SK-N-SH (cell line): ENCODE measurements at regions of chr3 and their contacts with region 1.

Region 1: DNA sequence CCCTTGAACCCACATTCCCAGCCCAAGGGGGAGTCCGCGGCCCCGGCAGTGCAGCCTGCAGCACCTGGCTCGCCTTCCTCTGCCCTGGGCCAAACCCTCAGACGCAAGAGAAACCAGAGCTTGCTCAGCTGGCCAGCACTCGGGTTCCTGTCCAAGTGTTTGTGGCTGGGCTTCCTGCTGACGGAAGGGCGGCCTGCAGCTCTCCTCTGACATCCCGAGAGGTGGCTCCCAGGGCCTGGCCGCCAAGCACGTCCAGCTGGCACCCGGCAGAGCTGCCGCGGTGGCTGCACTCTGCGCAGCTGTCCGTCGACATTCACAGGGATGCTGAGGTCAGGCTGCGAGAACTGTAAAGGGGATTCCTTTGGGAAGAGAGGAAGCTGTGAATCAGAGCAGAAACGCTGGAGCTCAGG is 85.6 kb downstream of the CPN2 start:
- DNase-seq: peak; percentile 83
- H3K4me3 ChIP-seq: no peak overlapping the region
- H3K27ac ChIP-seq: peak overlapping the region in 1 of 2 experiments; percentile 64; a peak in 2 of 4 replicates
- H3K4me1 ChIP-seq: peaks cover 0 to 33% of the 10 kb centered on the region in 2 experiments; a peak in 2 of 4 replicates
- H3K27me3 ChIP-seq: no peaks in the 10 kb centered on the region
- CTCF ChIP-seq: no peak
- EP300 ChIP-seq: no peak
- RAD21 ChIP-seq: no peak; the same call in 1 of the 2 replicates

Region 2: DNA sequence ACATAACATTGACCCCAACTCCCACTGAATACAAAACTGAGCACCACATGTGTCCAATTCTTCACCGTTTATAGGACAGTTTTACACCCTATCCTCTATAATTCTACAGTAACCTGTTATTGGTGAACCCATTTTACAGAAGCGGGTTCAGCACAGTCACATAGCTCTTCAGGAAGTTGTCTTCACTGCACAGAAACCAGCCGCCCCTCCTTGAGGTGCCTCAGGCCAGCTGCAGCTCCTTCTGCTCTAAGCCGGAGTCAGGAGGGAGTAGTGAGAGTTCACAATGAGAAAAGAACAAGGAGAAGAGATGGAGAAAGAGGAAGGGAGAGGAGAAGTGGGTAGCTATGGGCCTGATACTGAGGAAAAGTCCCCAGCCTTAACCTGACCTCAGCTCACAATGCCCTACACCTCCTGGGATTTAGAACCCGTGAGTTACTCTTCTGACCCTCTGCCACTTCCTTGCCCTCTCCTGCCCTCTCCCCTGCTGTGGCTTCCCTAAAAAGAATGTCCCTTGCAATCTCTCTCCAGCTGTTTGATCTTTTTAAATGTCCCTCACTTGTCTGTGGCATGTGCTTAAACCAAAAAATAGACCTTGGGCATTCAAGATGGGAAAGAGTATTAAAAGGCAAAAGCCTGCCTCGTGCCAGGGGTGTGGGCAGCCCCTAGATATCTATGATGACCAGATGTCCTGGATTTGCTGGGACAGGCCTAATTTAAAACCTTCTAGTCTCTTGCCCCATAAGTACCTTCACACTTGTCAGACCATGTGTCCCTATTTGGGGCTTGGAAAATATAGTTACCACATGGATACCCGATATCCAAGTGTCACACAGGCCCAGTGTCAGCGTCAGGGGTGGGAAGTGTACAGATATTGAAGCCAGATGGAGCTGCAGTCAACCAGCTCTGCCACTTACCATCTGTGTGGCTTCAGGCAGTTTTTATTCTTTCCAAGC is 200.8 kb before region 1 on chr3:
- CTCF ChIA-PET with region 1: no interaction called
- POLR2A ChIA-PET with region 1: no interaction called
- DNase-seq: no peak
- H3K4me3 ChIP-seq: no peak overlapping the region
- H3K27ac ChIP-seq: no peak overlapping the region
- H3K4me1 ChIP-seq: no peaks in the 10 kb centered on the region; a peak in 1 of 4 replicates
- H3K27me3 ChIP-seq: no peaks in the 10 kb centered on the region
- CTCF ChIP-seq: no peak
- EP300 ChIP-seq: no peak
- RAD21 ChIP-seq: no peak

Region 3: GRCh38 chr3:194250098-194251002 is 15.1 kb before region 1 on chr3:
- CTCF ChIA-PET with region 1: interaction called, 12 read pairs
- POLR2A ChIA-PET with region 1: interaction called, 27 read pairs
- DNase-seq: peak; percentile 84
- H3K4me3 ChIP-seq: no peak overlapping the region
- H3K27ac ChIP-seq: peak overlapping the region in 1 of 2 experiments; percentile 95; a peak in 3 of 4 replicates
- H3K4me1 ChIP-seq: peaks cover 0 to 59% of the 10 kb centered on the region in 2 experiments; a peak in 3 of 4 replicates
- H3K27me3 ChIP-seq: peaks cover 20% of the 10 kb centered on the region
- CTCF ChIP-seq: no peak
- EP300 ChIP-seq: no peak; a peak in 1 of 4 replicates
- RAD21 ChIP-seq: no peak

Region 4: DNA sequence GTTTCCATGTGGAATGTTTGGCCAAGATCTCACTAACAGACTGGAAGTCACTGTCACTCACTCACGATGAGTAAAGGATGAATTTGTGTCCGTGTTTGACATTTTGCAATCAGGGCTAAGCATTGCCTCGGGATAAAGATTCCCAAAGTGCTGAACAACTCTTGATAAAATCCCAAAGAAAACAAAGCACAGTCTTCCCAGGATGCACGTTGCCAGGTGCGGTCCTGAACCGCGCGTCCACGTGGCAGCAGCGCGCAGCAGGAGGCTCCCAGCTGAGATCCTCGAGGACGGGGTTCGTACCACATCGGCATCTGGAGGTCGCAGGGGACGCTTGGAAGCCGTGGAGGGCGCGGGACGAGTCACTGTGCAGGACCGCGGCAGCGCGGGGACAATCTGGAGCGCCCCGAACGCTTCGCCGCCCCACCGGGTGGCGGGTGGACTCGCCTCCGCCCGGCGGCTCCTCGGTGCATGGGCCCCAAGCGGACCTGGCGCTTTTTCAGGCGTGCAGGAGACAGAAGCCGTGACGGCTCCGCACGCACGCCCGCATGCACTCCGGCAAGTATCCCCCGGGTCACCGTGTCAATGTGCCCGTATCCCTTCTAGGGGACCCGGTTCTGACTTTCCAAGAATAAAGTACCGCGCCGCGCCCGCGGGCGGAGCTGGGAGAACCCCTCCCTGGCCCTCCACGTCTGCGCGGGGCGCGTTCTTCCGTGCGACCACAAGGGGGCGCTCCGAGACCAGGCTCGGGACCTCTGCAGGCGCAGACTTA is 67.9 kb after region 1 on chr3:
- CTCF ChIA-PET with region 1: no interaction called
- POLR2A ChIA-PET with region 1: no interaction called
- DNase-seq: peak; percentile 90
- H3K4me3 ChIP-seq: peak overlapping the region; percentile 53 to 59
- H3K27ac ChIP-seq: no peak overlapping the region
- H3K4me1 ChIP-seq: peaks cover 5 to 35% of the 10 kb centered on the region in 2 experiments; a peak in 2 of 4 replicates
- H3K27me3 ChIP-seq: no peaks in the 10 kb centered on the region
- CTCF ChIP-seq: peak; percentile 95
- EP300 ChIP-seq: no peak
- RAD21 ChIP-seq: peak; percentile 98

Region 5: GRCh38 chr3:194711913-194712312 is 446.4 kb after region 1 on chr3:
- CTCF ChIA-PET with region 1: no interaction called
- POLR2A ChIA-PET with region 1: no interaction called
- DNase-seq: no peak
- H3K4me3 ChIP-seq: no peak overlapping the region
- H3K27ac ChIP-seq: peak overlapping the region in 1 of 2 experiments; percentile 79; a peak in 2 of 4 replicates
- H3K4me1 ChIP-seq: peaks cover 0 to 4% of the 10 kb centered on the region in 2 experiments; a peak in 1 of 4 replicates
- H3K27me3 ChIP-seq: no peaks in the 10 kb centered on the region
- CTCF ChIP-seq: no peak
- EP300 ChIP-seq: no peak
- RAD21 ChIP-seq: no peak